ENCODE measurements at regions of chr3 and their contacts with region 1.

Region 1: DNA sequence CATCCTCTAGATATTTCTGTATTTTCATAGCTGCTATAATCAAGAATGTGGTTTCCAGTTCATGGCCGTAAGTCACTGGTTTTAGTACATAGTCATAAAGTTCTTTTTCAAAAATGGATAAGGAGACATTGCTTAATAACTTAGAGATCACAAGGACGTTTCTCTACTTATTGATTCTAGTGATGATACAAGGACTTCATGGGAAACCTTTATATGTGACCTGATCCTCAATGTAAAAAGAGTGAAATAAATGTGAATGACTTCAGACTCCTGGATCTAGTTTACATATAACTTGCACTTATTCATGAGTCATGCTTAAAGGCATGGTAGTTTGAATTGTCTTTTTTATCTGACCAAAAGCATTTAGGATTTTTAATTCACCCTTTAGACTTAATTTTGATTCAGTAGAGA is 35.2 kb downstream of the TSC22D2 start:
- DNase-seq: peak; percentile 32
- H3K4me3 ChIP-seq: no peak overlapping the region
- H3K27ac ChIP-seq: no peak overlapping the region
- H3K4me1 ChIP-seq: peaks cover 34% of the 10 kb centered on the region
- H3K27me3 ChIP-seq: no peaks in the 10 kb centered on the region
- CTCF ChIP-seq: no peak

Region 2: GRCh38 chr3:150480877-150481276 is 37.5 kb after region 1 on chr3:
- CTCF ChIA-PET with region 1: no interaction called
- dilution Hi-C with region 1: loop called (anchors 5 kb)
- in situ Hi-C with region 1: no loop called
- intact Hi-C with region 1: no loop called
- DNase-seq: no peak
- H3K4me3 ChIP-seq: no peak overlapping the region
- H3K27ac ChIP-seq: no peak overlapping the region
- H3K4me1 ChIP-seq: no peaks in the 10 kb centered on the region
- H3K27me3 ChIP-seq: no peaks in the 10 kb centered on the region
- CTCF ChIP-seq: no peak

Region 3: DNA sequence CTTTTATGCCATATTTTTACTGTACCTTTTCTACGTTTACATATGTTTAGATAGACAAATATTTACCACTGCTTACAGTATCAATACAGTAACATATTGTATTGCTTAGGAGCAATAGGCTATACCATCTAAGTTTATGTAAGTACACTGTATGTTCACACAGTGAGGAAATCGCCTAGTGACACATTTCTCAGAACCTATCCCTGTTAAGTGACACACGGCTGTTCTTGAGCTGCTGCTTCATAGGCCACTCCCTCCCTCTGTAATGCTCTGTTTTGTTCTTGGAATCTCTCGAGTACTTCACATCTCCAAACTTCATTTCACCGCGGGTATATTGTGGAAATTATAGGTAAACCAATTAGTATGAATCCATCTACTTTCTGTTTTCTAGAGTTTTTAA is 146.4 kb after region 1 on chr3:
- CTCF ChIA-PET with region 1: no interaction called
- dilution Hi-C with region 1: no loop called
- in situ Hi-C with region 1: no loop called
- intact Hi-C with region 1: no loop called
- DNase-seq: no peak
- H3K4me3 ChIP-seq: no peak overlapping the region
- H3K27ac ChIP-seq: no peak overlapping the region
- H3K4me1 ChIP-seq: no peaks in the 10 kb centered on the region
- H3K27me3 ChIP-seq: no peaks in the 10 kb centered on the region
- CTCF ChIP-seq: no peak

Region 4: DNA sequence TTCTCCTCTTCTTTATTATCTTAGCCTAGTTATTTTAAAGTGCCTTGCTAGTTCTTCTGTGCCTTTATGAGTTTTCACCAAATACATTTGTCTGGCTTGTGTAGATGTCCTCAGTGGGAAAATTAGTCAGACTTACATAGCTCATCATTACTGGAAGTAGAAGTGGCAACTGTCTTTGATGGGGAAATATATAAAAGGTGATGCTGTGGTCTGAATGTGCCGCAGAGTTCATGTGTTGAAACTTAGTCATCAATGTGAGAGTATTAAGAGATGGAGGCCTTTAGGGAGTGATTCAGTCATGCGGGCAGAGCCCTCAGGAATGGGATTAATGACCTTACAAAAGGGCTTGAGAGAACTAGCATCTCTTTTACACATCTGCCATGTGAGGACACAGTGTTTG is 266.8 kb after region 1 on chr3:
- CTCF ChIA-PET with region 1: no interaction called
- dilution Hi-C with region 1: no loop called
- in situ Hi-C with region 1: no loop called
- intact Hi-C with region 1: no loop called
- DNase-seq: peak; percentile 87
- H3K4me3 ChIP-seq: no peak overlapping the region
- H3K27ac ChIP-seq: no peak overlapping the region
- H3K4me1 ChIP-seq: no peaks in the 10 kb centered on the region
- H3K27me3 ChIP-seq: no peaks in the 10 kb centered on the region
- CTCF ChIP-seq: no peak

Region 5: DNA sequence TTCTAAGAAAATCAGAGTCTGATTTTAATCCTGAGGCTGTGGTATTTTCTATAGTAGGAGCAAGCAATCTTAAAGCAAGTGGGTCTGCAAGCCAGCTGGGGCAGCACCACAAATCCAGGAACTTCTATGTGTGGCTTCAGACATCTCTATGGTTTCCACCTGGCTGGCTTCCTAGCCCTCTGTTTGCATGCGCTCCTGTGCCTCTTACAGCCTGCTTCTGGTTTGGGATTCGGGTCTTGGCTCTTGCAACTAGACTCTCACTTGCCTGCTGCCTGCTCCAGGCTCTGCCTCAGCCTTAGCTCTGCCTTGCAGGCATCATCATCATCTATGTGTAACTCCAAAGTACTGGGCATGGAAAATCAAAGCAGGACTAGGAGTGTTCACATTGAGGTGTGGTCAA is 418.5 kb after region 1 on chr3:
- CTCF ChIA-PET with region 1: no interaction called
- dilution Hi-C with region 1: no loop called
- in situ Hi-C with region 1: no loop called
- intact Hi-C with region 1: no loop called
- DNase-seq: no peak
- H3K4me3 ChIP-seq: no peak overlapping the region
- H3K27ac ChIP-seq: no peak overlapping the region
- H3K4me1 ChIP-seq: no peaks in the 10 kb centered on the region
- H3K27me3 ChIP-seq: no peaks in the 10 kb centered on the region
- CTCF ChIP-seq: no peak

Measured in mammary epithelial cell (primary cell).